ENCODE measurements at regions of chr1 and their contacts with region 1.

Region 1: GRCh38 chr1:214198571-214198970 is 82.4 kb upstream of the SMYD2 start:
- DNase-seq: no peak
- H3K4me3 ChIP-seq: no peak overlapping the region
- H3K27ac ChIP-seq: no peak overlapping the region
- H3K4me1 ChIP-seq: peaks cover 0 to 6% of the 10 kb centered on the region in 2 experiments; a peak in 1 of 4 replicates
- H3K27me3 ChIP-seq: no peaks in the 10 kb centered on the region; the same call in 1 of the 2 replicates
- CTCF ChIP-seq: no peak
- EP300 ChIP-seq: no peak
- RAD21 ChIP-seq: no peak

Region 2: DNA sequence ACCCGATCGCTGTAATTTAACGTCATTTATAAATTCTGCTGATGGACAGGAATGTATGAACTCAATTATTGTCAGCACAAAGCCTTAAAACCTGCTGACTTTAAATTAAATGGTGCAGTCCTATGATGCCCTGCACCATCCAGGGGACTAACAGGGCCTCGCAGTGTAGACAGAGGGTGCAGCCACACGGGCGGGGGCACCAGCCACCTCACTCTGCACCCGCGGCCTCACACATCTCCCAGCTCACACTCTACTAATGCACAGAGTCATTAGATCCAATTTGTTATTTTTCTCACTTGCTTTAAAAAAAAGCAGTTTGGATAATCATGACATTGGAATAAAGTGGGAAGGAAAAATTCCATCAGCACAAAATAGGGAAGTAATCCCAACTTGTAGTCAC is 161.1 kb before region 1 on chr1:
- CTCF ChIA-PET with region 1: no interaction called
- POLR2A ChIA-PET with region 1: no interaction called
- DNase-seq: no peak
- H3K4me3 ChIP-seq: no peak overlapping the region
- H3K27ac ChIP-seq: no peak overlapping the region
- H3K4me1 ChIP-seq: peaks cover 0 to 2% of the 10 kb centered on the region in 2 experiments; a peak in 2 of 4 replicates
- H3K27me3 ChIP-seq: no peaks in the 10 kb centered on the region
- CTCF ChIP-seq: no peak
- EP300 ChIP-seq: no peak
- RAD21 ChIP-seq: no peak

Region 3: DNA sequence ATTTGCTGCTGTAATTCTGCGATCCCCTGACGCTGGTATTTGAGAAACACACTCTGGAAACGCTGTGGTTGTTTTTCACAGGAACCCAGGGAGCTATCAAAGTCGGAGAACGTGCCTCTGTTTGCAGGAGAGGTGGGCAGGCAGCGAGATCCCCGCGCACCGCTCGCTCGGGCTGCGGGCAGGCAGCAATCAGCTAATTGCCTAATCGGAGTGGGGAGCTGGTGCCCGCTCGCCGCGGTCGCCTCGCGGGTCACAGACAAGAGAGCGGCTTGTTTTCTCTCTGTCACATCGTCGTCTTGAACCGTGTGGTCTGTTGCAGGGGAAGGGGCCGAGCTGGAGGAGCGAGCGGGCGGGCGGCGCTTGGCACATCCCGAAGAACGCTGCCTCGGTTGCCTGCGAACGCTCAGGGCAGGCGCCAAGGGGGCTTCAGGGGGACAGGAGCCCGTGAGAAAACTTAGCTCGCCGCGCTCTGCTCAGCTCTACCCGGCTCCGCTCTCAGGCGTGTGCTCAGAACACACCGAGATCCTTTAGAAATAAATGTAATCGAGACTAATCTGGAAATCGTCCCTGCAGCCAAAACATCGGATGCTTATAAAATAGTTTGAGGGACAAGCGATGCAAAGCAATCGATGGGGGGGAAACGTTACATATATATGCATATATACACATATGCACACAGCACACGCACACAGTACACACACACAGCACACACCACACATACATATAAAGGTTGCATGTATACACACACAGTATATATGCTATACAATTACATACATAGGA is 11.3 kb before region 1 on chr1:
- CTCF ChIA-PET with region 1: interaction called, 12 read pairs
- POLR2A ChIA-PET with region 1: no interaction called
- DNase-seq: peak; percentile 78
- H3K4me3 ChIP-seq: peak overlapping the region; percentile 47 to 56
- H3K27ac ChIP-seq: peak overlapping the region in 1 of 2 experiments; percentile 36; a peak in 1 of 4 replicates
- H3K4me1 ChIP-seq: peaks cover 0 to 14% of the 10 kb centered on the region in 2 experiments; a peak in 2 of 4 replicates
- H3K27me3 ChIP-seq: peaks cover 27% of the 10 kb centered on the region
- CTCF ChIP-seq: no peak
- EP300 ChIP-seq: no peak
- RAD21 ChIP-seq: no peak

Region 4: GRCh38 chr1:214213136-214213535 is 14.6 kb after region 1 on chr1:
- CTCF ChIA-PET with region 1: interaction called, 13 read pairs
- POLR2A ChIA-PET with region 1: no interaction called
- DNase-seq: no peak
- H3K4me3 ChIP-seq: no peak overlapping the region
- H3K27ac ChIP-seq: no peak overlapping the region
- H3K4me1 ChIP-seq: peaks cover 0 to 3% of the 10 kb centered on the region in 2 experiments; a peak in 1 of 4 replicates
- H3K27me3 ChIP-seq: peaks cover 8% of the 10 kb centered on the region; the same call in 1 of the 2 replicates
- CTCF ChIP-seq: no peak
- EP300 ChIP-seq: no peak
- RAD21 ChIP-seq: no peak

Region 5: GRCh38 chr1:214234635-214235025 is 36.1 kb after region 1 on chr1:
- CTCF ChIA-PET with region 1: no interaction called
- POLR2A ChIA-PET with region 1: no interaction called
- DNase-seq: no peak
- H3K4me3 ChIP-seq: no peak overlapping the region
- H3K27ac ChIP-seq: no peak overlapping the region
- H3K4me1 ChIP-seq: no peaks in the 10 kb centered on the region
- H3K27me3 ChIP-seq: no peaks in the 10 kb centered on the region
- CTCF ChIP-seq: no peak
- EP300 ChIP-seq: no peak
- RAD21 ChIP-seq: no peak

Region 6: GRCh38 chr1:214251354-214251753 is 52.8 kb after region 1 on chr1:
- CTCF ChIA-PET with region 1: no interaction called
- POLR2A ChIA-PET with region 1: no interaction called
- DNase-seq: no peak
- H3K4me3 ChIP-seq: no peak overlapping the region
- H3K27ac ChIP-seq: no peak overlapping the region
- H3K4me1 ChIP-seq: no peaks in the 10 kb centered on the region
- H3K27me3 ChIP-seq: no peaks in the 10 kb centered on the region
- CTCF ChIP-seq: no peak
- EP300 ChIP-seq: no peak
- RAD21 ChIP-seq: no peak

Region 7: GRCh38 chr1:214316593-214316992 is 118.0 kb after region 1 on chr1:
- CTCF ChIA-PET with region 1: no interaction called
- POLR2A ChIA-PET with region 1: no interaction called
- DNase-seq: no peak
- H3K4me3 ChIP-seq: no peak overlapping the region
- H3K27ac ChIP-seq: no peak overlapping the region
- H3K4me1 ChIP-seq: peaks cover 0 to 5% of the 10 kb centered on the region in 2 experiments; a peak in 1 of 4 replicates
- H3K27me3 ChIP-seq: no peaks in the 10 kb centered on the region
- CTCF ChIP-seq: no peak
- EP300 ChIP-seq: no peak
- RAD21 ChIP-seq: no peak